A549 (cell line): ENCODE measurements at regions of chr17 and their contacts with region 1.

Region 1: DNA sequence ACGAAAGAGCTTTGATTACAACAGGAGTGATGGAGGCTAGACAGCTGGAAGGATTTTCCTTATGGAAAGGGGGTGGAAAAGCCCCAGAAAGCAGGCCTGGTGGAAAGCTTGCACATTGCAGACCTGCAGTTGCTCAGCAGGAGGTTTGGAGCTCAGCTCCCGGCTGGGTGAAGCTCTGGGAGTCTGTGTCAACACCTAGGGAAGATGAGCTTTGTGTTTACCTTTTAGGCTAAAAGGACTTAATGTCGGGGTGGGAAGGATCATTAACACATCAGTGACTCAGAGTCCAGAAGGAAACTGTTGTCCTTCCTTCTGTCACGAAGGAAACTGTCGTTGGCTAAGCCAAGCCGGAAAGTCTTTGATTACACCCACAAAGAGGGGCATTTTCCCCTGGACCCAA is 48.2 kb downstream of the RAP1GAP2 start:
- DNase-seq: peak; percentile 76 to 96
- ATAC-seq: peak; percentile 85 to 86
- H3K4me3 ChIP-seq: no peak overlapping the region
- H3K27ac ChIP-seq: peak overlapping the region; percentile 70 to 84
- H3K4me1 ChIP-seq: peaks cover 46% of the 10 kb centered on the region
- CTCF ChIP-seq: no peak
- EP300 ChIP-seq: peak; percentile 50 to 58; a peak in 2 of 5 replicates
- POLR2A ChIP-seq: no peak
- RAD21 ChIP-seq: 0 out of 5 replicates have a peak, but pooled peaks of 1 of the 2 experiments have one; percentile 14

Region 2: DNA sequence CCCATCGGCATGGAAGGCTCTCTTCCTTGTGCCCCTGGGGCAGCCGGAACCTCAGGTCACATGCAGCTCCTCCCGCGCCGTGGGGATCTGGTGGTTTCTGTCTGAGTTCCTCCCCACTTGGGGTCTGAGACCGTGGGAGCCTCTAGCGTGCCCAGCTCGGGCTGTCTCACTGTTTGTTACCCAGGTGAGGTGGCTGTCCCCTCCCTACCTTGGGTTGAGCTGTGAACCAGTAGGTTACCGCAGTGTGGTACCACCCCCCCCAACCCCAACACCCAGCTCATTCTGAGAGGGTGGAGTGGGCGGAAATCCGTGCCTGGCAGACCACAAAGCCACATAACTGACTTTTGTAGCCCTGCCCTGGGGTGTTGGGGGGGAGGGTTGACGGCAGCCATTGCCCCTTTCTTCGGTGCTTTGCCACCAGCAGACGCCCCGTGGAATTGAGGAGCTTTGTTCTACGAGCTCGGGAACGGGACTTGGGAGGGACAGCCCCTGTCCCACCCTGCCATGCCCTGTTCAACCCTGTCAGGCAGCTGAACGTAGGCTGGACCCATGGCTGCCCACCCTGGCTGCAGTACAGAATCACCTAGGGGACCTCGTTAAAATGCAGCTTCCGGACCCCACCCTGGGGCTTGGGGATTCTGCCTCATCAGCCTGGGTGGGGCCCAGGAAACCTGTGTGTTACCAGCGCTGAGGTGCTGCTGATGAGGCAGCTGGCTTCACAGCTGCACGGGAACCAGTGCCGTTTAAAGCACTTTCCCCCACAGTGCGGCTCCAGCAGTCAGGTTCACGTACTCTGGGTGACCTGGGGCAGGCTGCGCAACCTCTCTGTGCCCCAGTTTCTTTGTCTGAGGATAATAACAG is 29.7 kb before region 1 on chr17:
- CTCF ChIA-PET with region 1: interaction called, 10 read pairs
- POLR2A ChIA-PET with region 1: no interaction called
- DNase-seq: no peak
- ATAC-seq: no peak
- H3K4me3 ChIP-seq: no peak overlapping the region
- H3K27ac ChIP-seq: peak overlapping the region in 1 of 2 experiments; percentile 19; a peak in 1 of 6 replicates
- H3K4me1 ChIP-seq: peaks cover 14% of the 10 kb centered on the region; the same call in 2 of the 3 replicates
- CTCF ChIP-seq: no peak
- EP300 ChIP-seq: no peak
- POLR2A ChIP-seq: no peak
- RAD21 ChIP-seq: no peak

Region 3: DNA sequence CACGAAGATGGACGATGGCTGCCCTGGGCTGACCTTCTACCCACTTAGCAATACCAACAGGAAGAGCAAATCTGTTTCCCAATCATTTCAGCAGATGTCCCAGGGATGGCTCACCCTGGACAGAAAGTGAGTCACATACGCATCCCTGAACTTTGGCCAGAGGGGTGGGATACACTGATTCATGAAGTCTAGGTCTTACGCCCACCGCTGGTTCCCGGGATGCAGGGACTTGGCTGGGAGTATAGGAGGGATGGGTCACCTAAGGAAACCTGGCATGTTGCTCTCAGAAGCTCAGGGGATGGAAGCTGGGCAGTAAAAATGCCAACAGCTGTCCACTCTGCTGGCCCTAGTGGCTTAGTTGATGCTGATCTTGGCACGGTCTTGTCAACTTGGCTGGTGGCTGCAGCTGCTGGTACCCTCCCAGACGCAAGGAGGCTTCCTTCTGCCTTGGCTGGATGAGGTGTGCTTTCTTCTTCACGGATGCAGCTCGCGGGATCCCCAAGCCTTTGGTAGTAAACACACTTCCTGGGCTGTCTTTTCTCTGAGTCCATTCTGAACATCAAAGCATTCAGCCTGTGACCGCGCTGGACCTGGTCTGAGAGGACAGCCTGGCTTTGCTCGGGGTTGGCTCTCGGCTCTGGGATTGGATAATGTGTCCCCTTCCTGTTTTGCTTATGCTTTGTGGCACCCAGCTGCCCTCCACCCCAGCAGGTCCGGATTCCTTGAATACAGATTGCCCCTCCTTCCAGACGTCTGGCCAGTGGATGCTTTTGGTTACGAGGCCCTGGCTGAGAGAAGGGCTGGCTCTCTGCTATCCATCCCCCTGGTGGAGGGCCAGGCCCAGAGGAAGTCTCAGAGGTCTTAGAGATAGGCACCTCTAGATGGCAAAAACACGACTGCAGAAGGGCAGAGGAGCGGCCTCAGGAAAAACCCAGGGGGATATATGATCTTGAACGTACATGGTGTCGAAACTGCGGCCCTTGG is 23.3 kb after region 1 on chr17:
- CTCF ChIA-PET with region 1: interaction called, 97 read pairs
- POLR2A ChIA-PET with region 1: interaction called, 3 read pairs
- DNase-seq: peak in 1 of 2 experiments; percentile 79
- ATAC-seq: peak; percentile 76 to 86
- H3K4me3 ChIP-seq: no peak overlapping the region
- H3K27ac ChIP-seq: peak overlapping the region; percentile 34 to 74
- H3K4me1 ChIP-seq: peaks cover 17% of the 10 kb centered on the region
- CTCF ChIP-seq: no peak
- EP300 ChIP-seq: no peak
- POLR2A ChIP-seq: no peak
- RAD21 ChIP-seq: no peak

Region 4: GRCh38 chr17:2892305-2892971 is 48.0 kb after region 1 on chr17:
- CTCF ChIA-PET with region 1: interaction called, 25 read pairs
- POLR2A ChIA-PET with region 1: no interaction called
- DNase-seq: peak; percentile 94 to 97
- ATAC-seq: peak; percentile 95 to 98
- H3K4me3 ChIP-seq: no peak overlapping the region
- H3K27ac ChIP-seq: peak overlapping the region; percentile 50 to 68; a peak in 5 of 6 replicates
- H3K4me1 ChIP-seq: peaks cover 41% of the 10 kb centered on the region
- CTCF ChIP-seq: no peak
- EP300 ChIP-seq: no peak
- POLR2A ChIP-seq: no peak
- RAD21 ChIP-seq: no peak

Region 5: GRCh38 chr17:2916461-2916860 is 72.0 kb after region 1 on chr17:
- CTCF ChIA-PET with region 1: interaction called, 14 read pairs
- POLR2A ChIA-PET with region 1: no interaction called
- DNase-seq: no peak
- ATAC-seq: no peak
- H3K4me3 ChIP-seq: no peak overlapping the region
- H3K27ac ChIP-seq: no peak overlapping the region
- H3K4me1 ChIP-seq: no peaks in the 10 kb centered on the region
- CTCF ChIP-seq: no peak
- EP300 ChIP-seq: no peak
- POLR2A ChIP-seq: no peak
- RAD21 ChIP-seq: no peak

Region 6: GRCh38 chr17:2975469-2975958 is 131.1 kb after region 1 on chr17:
- CTCF ChIA-PET with region 1: interaction called, 41 read pairs
- POLR2A ChIA-PET with region 1: no interaction called
- DNase-seq: no peak
- ATAC-seq: no peak
- H3K4me3 ChIP-seq: no peak overlapping the region
- H3K27ac ChIP-seq: peak overlapping the region in 1 of 2 experiments; percentile 47; a peak in 2 of 6 replicates
- H3K4me1 ChIP-seq: peaks cover 18% of the 10 kb centered on the region
- CTCF ChIP-seq: no peak
- EP300 ChIP-seq: no peak
- POLR2A ChIP-seq: no peak
- RAD21 ChIP-seq: no peak

Region 7: DNA sequence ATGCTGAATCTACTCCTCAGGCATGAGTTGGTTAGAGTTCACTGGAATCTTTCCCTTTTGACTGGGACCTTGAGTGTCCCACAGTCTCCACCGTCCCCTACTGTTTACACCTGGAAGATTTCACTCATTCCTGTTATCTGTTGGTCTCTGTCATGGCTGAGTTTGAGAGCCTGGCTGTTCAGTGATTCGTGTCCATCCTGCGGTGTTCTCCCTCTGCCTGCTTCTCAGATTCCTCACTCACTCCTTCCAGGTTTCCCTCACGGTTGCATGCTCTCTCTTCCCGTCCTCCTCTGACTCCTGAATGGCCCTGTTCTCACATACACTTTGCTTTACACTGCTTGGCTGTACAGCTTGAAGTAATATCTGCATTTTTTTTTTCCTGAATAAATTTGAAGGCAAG is 194.5 kb after region 1 on chr17:
- CTCF ChIA-PET with region 1: interaction called, 10 read pairs
- POLR2A ChIA-PET with region 1: no interaction called
- DNase-seq: no peak
- ATAC-seq: peak in 1 of 2 experiments; percentile 24; a peak in 1 of 6 replicates
- H3K4me3 ChIP-seq: no peak overlapping the region
- H3K27ac ChIP-seq: no peak overlapping the region
- H3K4me1 ChIP-seq: no peaks in the 10 kb centered on the region
- CTCF ChIP-seq: no peak
- EP300 ChIP-seq: no peak
- POLR2A ChIP-seq: no peak
- RAD21 ChIP-seq: no peak